ENCODE measurements at regions of chr1 and their contacts with region 1.

Region 1: GRCh38 chr1:117534995-117535467 is 70.8 kb upstream of the TENT5C start:
- DNase-seq: peak; percentile 28
- ATAC-seq: peak; percentile 96
- H3K4me3 ChIP-seq: no peak overlapping the region
- H3K27ac ChIP-seq: no peak overlapping the region
- H3K4me1 ChIP-seq: no peaks in the 10 kb centered on the region
- H3K27me3 ChIP-seq: no peaks in the 10 kb centered on the region
- CTCF ChIP-seq: peak; percentile 60 to 76 (median 62)
- EP300 ChIP-seq: 0 out of 4 replicates have a peak, but pooled peaks of 1 of the 2 experiments have one; percentile 35
- POLR2A ChIP-seq: no peak
- RAD21 ChIP-seq: peak; percentile 49

Region 2: GRCh38 chr1:117512743-117513321 is 22.2 kb before region 1 on chr1:
- CTCF ChIA-PET with region 1: interaction called, 66 read pairs
- POLR2A ChIA-PET with region 1: no interaction called
- RAD21 ChIA-PET with region 1: interaction called, 5 read pairs
- SMC1A ChIA-PET with region 1: interaction called, 16 read pairs
- in situ Hi-C with region 1: no loop called
- intact Hi-C with region 1: no loop called
- DNase-seq: no peak
- ATAC-seq: peak; percentile 41; the same call in 1 of the 3 replicates
- H3K4me3 ChIP-seq: no peak overlapping the region
- H3K27ac ChIP-seq: no peak overlapping the region
- H3K4me1 ChIP-seq: no peaks in the 10 kb centered on the region
- H3K27me3 ChIP-seq: no peaks in the 10 kb centered on the region
- CTCF ChIP-seq: peak; percentile 42 to 66 (median 48); a peak in 5 of 6 replicates
- EP300 ChIP-seq: no peak
- POLR2A ChIP-seq: no peak
- RAD21 ChIP-seq: peak; percentile 66

Region 3: GRCh38 chr1:117664314-117664713 is 129.3 kb after region 1 on chr1:
- CTCF ChIA-PET with region 1: interaction called, 151 read pairs
- POLR2A ChIA-PET with region 1: no interaction called
- RAD21 ChIA-PET with region 1: interaction called, 4 read pairs
- SMC1A ChIA-PET with region 1: no interaction called
- in situ Hi-C with region 1: no loop called
- intact Hi-C with region 1: no loop called
- DNase-seq: peak; percentile 92
- ATAC-seq: peak; percentile 95
- H3K4me3 ChIP-seq: no peak overlapping the region
- H3K27ac ChIP-seq: peak overlapping the region; percentile 42
- H3K4me1 ChIP-seq: peaks cover 39% of the 10 kb centered on the region
- H3K27me3 ChIP-seq: peaks cover under 1% of the 10 kb centered on the region in 2 experiments; a peak in 2 of 4 replicates
- CTCF ChIP-seq: no peak
- EP300 ChIP-seq: peak; percentile 99
- POLR2A ChIP-seq: no peak
- RAD21 ChIP-seq: no peak

Region 4: DNA sequence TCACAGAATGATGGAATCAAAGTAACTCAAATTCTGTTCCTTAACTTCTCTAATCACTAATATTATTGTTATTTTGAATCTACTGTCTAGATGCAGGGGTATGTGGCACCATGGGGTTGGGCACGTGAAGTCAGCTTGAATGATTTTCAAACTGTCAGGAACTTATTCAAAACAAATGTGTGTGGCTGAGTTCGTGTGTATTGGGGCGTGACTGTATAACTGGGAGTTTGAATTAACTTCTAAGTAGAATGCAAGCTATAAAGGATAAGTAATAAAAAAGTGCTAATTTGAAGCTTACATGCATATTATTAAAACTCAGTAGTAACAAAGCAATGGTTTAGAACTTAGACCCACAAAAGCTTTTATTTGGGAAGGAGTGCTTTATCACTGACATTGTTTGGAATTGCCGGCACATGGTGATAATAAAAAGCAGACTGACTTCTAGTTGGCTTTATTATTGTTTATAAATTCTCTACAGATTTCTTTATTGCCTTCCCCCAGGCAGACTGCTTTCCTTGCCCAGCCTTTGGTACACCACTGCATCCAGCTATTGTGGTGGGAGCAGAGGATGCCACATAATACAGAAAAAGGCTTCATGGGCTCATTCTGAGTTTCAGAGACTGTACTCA is 155.1 kb after region 1 on chr1:
- CTCF ChIA-PET with region 1: interaction called, 10 read pairs
- POLR2A ChIA-PET with region 1: no interaction called
- RAD21 ChIA-PET with region 1: no interaction called
- SMC1A ChIA-PET with region 1: interaction called, 3 read pairs
- in situ Hi-C with region 1: no loop called
- intact Hi-C with region 1: no loop called
- DNase-seq: no peak
- ATAC-seq: no peak
- H3K4me3 ChIP-seq: no peak overlapping the region
- H3K27ac ChIP-seq: no peak overlapping the region
- H3K4me1 ChIP-seq: no peaks in the 10 kb centered on the region
- H3K27me3 ChIP-seq: peaks cover 0 to 11% of the 10 kb centered on the region in 2 experiments; a peak in 3 of 4 replicates
- CTCF ChIP-seq: no peak
- EP300 ChIP-seq: no peak
- POLR2A ChIP-seq: no peak
- RAD21 ChIP-seq: no peak

Region 5: DNA sequence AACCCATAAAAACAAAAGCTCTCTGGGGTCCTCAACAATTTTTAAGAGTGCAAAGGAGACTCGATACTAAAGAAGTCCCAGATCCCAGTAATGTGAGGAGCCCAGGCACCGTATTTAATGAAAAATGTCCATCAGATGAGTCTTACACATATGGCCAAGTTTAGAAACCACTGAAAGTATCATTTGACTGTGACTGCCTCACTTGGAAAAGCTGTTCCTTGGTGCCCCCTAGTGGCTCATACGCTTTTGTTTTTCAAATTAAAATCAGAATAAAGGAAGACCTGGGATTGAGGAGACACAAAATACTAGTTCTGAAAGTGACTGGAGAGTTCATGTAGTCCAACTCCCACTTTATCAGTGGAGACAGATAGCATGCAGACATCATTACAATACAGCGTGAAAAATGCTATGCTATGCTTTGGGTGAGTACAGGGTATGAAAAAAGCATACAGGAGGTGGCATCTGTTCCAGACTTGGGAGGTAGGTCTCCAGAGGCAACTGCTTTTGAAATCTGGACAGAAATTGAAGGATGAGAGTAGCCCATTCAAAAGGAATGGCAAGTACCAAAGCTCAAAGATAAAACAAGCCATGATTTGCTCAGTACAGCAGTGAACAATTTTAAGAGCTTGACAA is 360.6 kb after region 1 on chr1:
- CTCF ChIA-PET with region 1: interaction called, 54 read pairs
- POLR2A ChIA-PET with region 1: no interaction called
- RAD21 ChIA-PET with region 1: interaction called, 8 read pairs
- SMC1A ChIA-PET with region 1: interaction called, 10 read pairs
- in situ Hi-C with region 1: loop called (anchors 10 kb)
- intact Hi-C with region 1: no loop called
- DNase-seq: peak; percentile 32
- ATAC-seq: peak; percentile 98
- H3K4me3 ChIP-seq: no peak overlapping the region
- H3K27ac ChIP-seq: no peak overlapping the region
- H3K4me1 ChIP-seq: no peaks in the 10 kb centered on the region
- H3K27me3 ChIP-seq: no peaks in the 10 kb centered on the region
- CTCF ChIP-seq: peak; percentile 73 to 82 (median 81); a peak in 5 of 6 replicates
- EP300 ChIP-seq: peak in 1 of 2 experiments; percentile 45; a peak in 1 of 4 replicates
- POLR2A ChIP-seq: no peak
- RAD21 ChIP-seq: peak; percentile 86

Region 6: DNA sequence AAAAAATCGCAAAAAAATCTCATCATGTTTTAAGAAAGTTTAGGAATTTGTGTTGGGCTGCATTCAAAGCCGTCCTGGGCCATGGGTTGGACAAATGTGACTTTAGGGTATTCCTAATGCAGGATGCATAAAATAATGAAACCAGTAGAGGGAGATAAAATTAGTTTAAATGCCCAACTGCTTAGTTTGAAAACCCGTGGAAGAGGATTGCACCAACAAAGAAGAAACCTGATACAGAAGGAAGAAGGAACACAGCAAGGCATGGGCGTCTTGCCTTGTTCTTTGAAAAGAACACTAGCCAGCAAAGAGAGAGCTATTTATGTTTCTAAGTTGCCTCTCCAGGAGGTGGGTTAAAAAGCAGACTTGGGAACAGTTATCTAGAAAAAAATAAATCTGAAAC is 432.4 kb after region 1 on chr1:
- CTCF ChIA-PET with region 1: no interaction called
- POLR2A ChIA-PET with region 1: no interaction called
- RAD21 ChIA-PET with region 1: no interaction called
- SMC1A ChIA-PET with region 1: no interaction called
- in situ Hi-C with region 1: no loop called
- intact Hi-C with region 1: no loop called
- DNase-seq: no peak
- ATAC-seq: no peak
- H3K4me3 ChIP-seq: no peak overlapping the region
- H3K27ac ChIP-seq: no peak overlapping the region
- H3K4me1 ChIP-seq: no peaks in the 10 kb centered on the region
- H3K27me3 ChIP-seq: no peaks in the 10 kb centered on the region
- CTCF ChIP-seq: no peak
- EP300 ChIP-seq: no peak
- POLR2A ChIP-seq: no peak
- RAD21 ChIP-seq: no peak